Mammary epithelial cell (primary cell): ENCODE measurements at regions of chr20 and their contacts with region 1.

Region 1: GRCh38 chr20:61516346-61517215 is 264.5 kb downstream of the CDH4 start:
- DNase-seq: no peak
- H3K4me3 ChIP-seq: no peak overlapping the region
- H3K27ac ChIP-seq: no peak overlapping the region
- H3K4me1 ChIP-seq: no peaks in the 10 kb centered on the region
- H3K27me3 ChIP-seq: no peaks in the 10 kb centered on the region
- CTCF ChIP-seq: no peak

Region 2: GRCh38 chr20:61600037-61600436 is 83.5 kb after region 1 on chr20:
- CTCF ChIA-PET with region 1: no interaction called
- dilution Hi-C with region 1: loop called (anchors 5 kb)
- in situ Hi-C with region 1: no loop called
- intact Hi-C with region 1: no loop called
- DNase-seq: no peak
- H3K4me3 ChIP-seq: no peak overlapping the region
- H3K27ac ChIP-seq: no peak overlapping the region
- H3K4me1 ChIP-seq: no peaks in the 10 kb centered on the region
- H3K27me3 ChIP-seq: no peaks in the 10 kb centered on the region
- CTCF ChIP-seq: no peak